AG04450 (cell line): ENCODE measurements at regions of chr1 and their contacts with region 1.

Region 1: GRCh38 chr1:63691701-63692425 is 82.0 kb upstream of the ROR1 start:
- DNase-seq: peak; percentile 68
- H3K4me3 ChIP-seq: no peak overlapping the region
- H3K27ac ChIP-seq: no peak overlapping the region
- H3K27me3 ChIP-seq: peaks cover 10% of the 10 kb centered on the region
- CTCF ChIP-seq: peak; percentile 68

Region 2: DNA sequence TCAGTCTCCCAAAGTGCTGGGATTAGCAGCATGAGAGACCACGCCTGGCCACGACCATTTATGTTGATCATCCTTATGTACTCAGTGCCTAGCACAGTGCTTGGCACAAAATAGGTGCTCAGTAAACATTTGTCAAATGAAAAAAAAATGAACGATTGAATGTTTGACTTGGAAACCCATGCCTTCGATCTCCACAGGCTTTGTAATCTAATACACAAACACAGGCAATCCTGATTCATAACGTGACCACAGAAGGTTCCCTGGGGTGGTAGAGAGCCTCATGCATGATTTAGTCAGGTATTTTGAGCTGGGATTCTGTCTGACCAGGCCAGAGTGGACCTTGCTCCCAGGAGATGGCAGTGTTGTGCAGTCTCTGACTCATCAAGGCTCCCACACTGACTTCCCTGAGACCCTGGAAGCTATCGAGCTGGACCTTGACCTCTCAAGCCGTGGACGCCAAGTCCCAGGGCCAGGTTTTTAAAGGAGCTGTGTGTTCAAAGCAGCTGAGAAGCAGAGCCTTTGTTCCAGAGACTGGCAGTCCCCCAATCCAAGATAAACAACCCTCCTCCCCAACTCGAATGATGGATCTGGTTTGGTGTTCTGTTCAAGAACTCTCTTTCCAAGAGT is 17.5 kb before region 1 on chr1:
- CTCF ChIA-PET with region 1: interaction called, 31 read pairs
- POLR2A ChIA-PET with region 1: no interaction called
- DNase-seq: peak; percentile 74
- H3K4me3 ChIP-seq: no peak overlapping the region
- H3K27ac ChIP-seq: no peak overlapping the region
- H3K27me3 ChIP-seq: no peaks in the 10 kb centered on the region
- CTCF ChIP-seq: peak; percentile 85

Region 3: GRCh38 chr1:63773815-63774616 is 82.2 kb after region 1 on chr1 and contains the start of gene ROR1:
- CTCF ChIA-PET with region 1: interaction called, 11 read pairs
- POLR2A ChIA-PET with region 1: no interaction called
- DNase-seq: no peak
- H3K4me3 ChIP-seq: peak within 1 kb of the TSS; percentile 66
- H3K27ac ChIP-seq: no peak within 1 kb of the TSS
- H3K27me3 ChIP-seq: peaks cover 29% of the 10 kb centered on the region
- CTCF ChIP-seq: peak; percentile 63
- polyA plus RNA-seq, gene ROR1: 7.1 and 7.3 TPM in 2 replicates

Region 4: GRCh38 chr1:63915121-63915520 is 223.3 kb after region 1 on chr1:
- CTCF ChIA-PET with region 1: interaction called, 27 read pairs
- POLR2A ChIA-PET with region 1: no interaction called
- DNase-seq: no peak
- H3K4me3 ChIP-seq: no peak overlapping the region
- H3K27ac ChIP-seq: no peak overlapping the region
- H3K27me3 ChIP-seq: peaks cover 17% of the 10 kb centered on the region
- CTCF ChIP-seq: peak; percentile 55

Region 5: GRCh38 chr1:64163970-64164369 is 472.1 kb after region 1 on chr1:
- CTCF ChIA-PET with region 1: interaction called, 17 read pairs
- POLR2A ChIA-PET with region 1: no interaction called
- DNase-seq: no peak
- H3K4me3 ChIP-seq: no peak overlapping the region
- H3K27ac ChIP-seq: no peak overlapping the region
- H3K27me3 ChIP-seq: no peaks in the 10 kb centered on the region
- CTCF ChIP-seq: peak; percentile 69